Activated CD8-positive, alpha-beta memory T cell treated with anti-CD3 and anti-CD28 coated beads, Interleukin-2, amount 10 ng/mL, durations not matched to agents 7 days and 5 days (primary cell): ENCODE measurements at regions of chr5 and their contacts with region 1.

Region 1: DNA sequence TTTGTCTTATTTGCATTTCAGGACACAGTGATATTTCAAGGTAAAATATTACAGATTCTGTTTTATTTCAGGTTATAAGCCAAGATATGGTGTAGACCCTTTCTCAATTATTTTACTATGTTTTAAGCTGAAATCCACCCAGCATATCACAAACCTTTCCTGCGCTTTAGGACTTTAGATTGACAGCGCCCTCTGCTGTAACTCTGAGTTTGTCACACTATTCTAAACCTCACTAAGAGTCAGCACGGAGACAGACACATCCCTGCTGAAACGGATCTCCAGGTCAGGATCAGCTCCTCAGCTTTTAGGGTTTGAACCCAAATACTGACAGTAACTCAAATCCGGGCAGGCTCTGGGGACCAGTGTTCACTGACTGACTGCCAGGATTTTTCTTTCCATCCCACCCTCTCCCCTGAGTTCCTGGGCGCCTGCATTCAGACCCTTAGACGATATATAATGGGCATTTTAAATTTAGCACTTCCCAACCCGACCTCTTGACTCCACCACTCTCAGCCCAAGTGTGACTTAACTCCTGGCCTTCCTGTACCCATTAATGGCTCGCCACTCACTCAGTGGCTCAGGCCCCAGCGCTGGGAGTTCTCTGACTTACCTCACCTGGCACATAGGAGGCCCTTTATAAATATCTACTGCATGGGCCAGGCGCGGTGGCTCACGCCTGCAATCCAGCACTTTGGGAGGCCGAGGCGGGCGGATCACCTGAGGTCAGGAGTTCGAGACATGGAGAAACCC is 33.5 kb downstream of the TLX3 start:
- DNase-seq: peak; percentile 55
- ATAC-seq: peak; percentile 73
- H3K4me3 Mint-ChIP-seq: no peak overlapping the region
- H3K27ac Mint-ChIP-seq: no peak overlapping the region
- H3K4me1 Mint-ChIP-seq: no peaks in the 10 kb centered on the region
- H3K27me3 Mint-ChIP-seq: peaks cover 19% of the 10 kb centered on the region

Region 2: GRCh38 chr5:171207256-171207847 is 135.2 kb before region 1 on chr5:
- CTCF ChIA-PET with region 1: interaction called, 89 read pairs
- DNase-seq: peak; percentile 43
- ATAC-seq: peak; percentile 39
- H3K4me3 Mint-ChIP-seq: no peak overlapping the region
- H3K27ac Mint-ChIP-seq: no peak overlapping the region
- H3K4me1 Mint-ChIP-seq: no peaks in the 10 kb centered on the region
- H3K27me3 Mint-ChIP-seq: peaks cover 44% of the 10 kb centered on the region

Region 3: DNA sequence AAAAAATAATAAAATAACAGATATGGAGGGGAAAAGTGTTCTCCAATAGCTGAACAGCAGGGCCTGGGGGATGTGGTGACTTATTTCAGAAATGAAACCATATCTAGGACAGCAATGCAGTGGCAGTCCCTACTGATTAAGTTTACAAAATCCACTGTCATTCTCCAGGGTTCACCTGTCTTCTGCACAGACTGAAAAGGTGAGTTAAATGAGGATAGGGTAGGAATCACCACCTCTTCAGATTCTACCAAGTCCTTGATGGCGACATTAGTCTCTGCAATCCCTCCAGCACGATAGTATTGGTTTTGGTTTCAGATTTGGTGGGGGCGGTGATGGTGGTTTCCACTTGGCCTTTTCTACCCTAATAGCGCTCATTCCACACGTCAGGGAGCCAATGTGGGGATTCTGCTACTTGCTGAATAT is 12.8 kb after region 1 on chr5:
- CTCF ChIA-PET with region 1: interaction called, 13 read pairs
- DNase-seq: peak; percentile 82
- ATAC-seq: peak; percentile 90
- H3K4me3 Mint-ChIP-seq: peak overlapping the region; percentile 73
- H3K27ac Mint-ChIP-seq: peak overlapping the region; percentile 86
- H3K4me1 Mint-ChIP-seq: peaks cover 22% of the 10 kb centered on the region
- H3K27me3 Mint-ChIP-seq: peaks cover 3% of the 10 kb centered on the region